Naive thymus-derived CD4-positive, alpha-beta T cell (primary cell): ENCODE measurements at regions of chr20 and their contacts with region 1.

Region 1: GRCh38 chr20:29443819-29444218 is 1813.6 kb upstream of the DEFB115 start:
- DNase-seq: no peak
- ATAC-seq: no peak
- H3K4me3 ChIP-seq: no peak overlapping the region
- H3K4me3 Mint-ChIP-seq: peak overlapping the region in 1 of 10 donors; percentile 45
- H3K27ac ChIP-seq: no peak overlapping the region
- H3K27ac Mint-ChIP-seq: no peak overlapping the region
- H3K4me1 ChIP-seq: no peaks in the 10 kb centered on the region
- H3K4me1 Mint-ChIP-seq: peaks cover 0 to 21% (median 0%) of the 10 kb centered on the region in 7 donors
- H3K27me3 ChIP-seq: no peaks in the 10 kb centered on the region
- H3K27me3 Mint-ChIP-seq: peaks cover 0 to 30% (median 16%) of the 10 kb centered on the region in 5 donors

Region 2: GRCh38 chr20:29497261-29497671 is 53.4 kb after region 1 on chr20:
- CTCF ChIA-PET with region 1: no interaction called
- POLR2A ChIA-PET with region 1: no interaction called
- intact Hi-C with region 1: loop called in 1 of 2 experiments (anchors 1 kb)
- DNase-seq: peak in 2 of 9 donors; percentile 12 to 13
- ATAC-seq: no peak
- H3K4me3 ChIP-seq: no peak overlapping the region
- H3K4me3 Mint-ChIP-seq: peak overlapping the region in 1 of 10 donors; percentile 67
- H3K27ac ChIP-seq: no peak overlapping the region
- H3K27ac Mint-ChIP-seq: peak overlapping the region in 3 of 9 donors; percentile 21 to 73 (median 38)
- H3K4me1 ChIP-seq: no peaks in the 10 kb centered on the region
- H3K4me1 Mint-ChIP-seq: peaks cover 0 to 9% (median 0%) of the 10 kb centered on the region in 7 donors
- H3K27me3 ChIP-seq: no peaks in the 10 kb centered on the region
- H3K27me3 Mint-ChIP-seq: peaks cover 0 to 5% (median 0%) of the 10 kb centered on the region in 5 donors